ENCODE measurements at regions of chr20 and their contacts with region 1.

Region 1: GRCh38 chr20:62010551-62011402 is 54.9 kb downstream of the TAF4 start:
- DNase-seq: peak; percentile 69
- ATAC-seq: peak; percentile 80
- H3K4me3 Mint-ChIP-seq: no peak overlapping the region
- H3K27ac Mint-ChIP-seq: peak overlapping the region; percentile 91; the same call in 1 of the 2 replicates
- H3K4me1 Mint-ChIP-seq: peaks cover 4% of the 10 kb centered on the region
- H3K27me3 Mint-ChIP-seq: no peaks in the 10 kb centered on the region
- CTCF ChIP-seq: peak; percentile 32; the same call in 1 of the 2 replicates

Region 2: DNA sequence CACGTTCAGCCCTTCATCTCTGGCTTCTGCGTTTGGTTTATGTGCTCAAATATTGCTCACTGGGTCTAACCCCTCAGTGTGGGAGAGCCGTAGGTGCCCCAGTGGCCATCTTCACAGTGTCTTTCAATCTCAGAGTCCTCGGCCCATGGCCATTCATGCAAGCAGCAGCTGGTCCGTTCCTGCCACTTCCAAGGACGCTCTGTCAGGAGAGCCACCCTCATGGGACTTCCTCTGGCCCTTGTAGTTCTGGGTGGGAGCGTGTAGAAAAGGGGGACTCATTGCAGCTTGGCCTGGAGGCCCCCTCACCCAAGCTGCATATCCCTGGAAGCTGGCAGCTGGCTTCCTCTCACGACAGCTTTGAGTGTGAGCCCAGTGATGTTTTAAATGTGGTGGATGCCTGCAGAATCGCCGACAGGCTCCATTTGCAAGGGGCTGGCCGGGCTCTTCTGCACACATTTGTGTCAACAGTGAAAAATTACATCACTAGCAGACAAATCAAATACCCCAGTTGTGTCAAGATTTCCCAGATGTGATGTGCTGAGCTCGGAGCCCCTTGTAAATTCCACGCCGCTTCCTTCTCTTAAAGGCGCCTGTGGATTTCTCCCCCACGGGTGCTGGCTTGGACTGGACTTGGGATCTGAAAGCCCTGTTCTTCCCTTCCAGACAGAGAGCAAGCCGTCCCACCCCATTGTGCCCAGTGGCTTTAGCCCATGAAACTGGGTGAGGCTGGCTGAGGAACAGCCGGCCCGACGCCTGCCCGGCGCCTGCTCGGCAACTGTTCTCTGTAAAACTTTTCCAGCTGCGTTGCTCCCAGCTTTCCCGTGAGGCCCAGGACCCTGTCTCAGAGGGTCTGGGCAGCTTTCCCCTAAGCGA is 305.2 kb before region 1 on chr20:
- CTCF ChIA-PET with region 1: no interaction called
- POLR2A ChIA-PET with region 1: no interaction called
- DNase-seq: no peak
- ATAC-seq: no peak
- H3K4me3 Mint-ChIP-seq: no peak overlapping the region
- H3K27ac Mint-ChIP-seq: no peak overlapping the region
- H3K4me1 Mint-ChIP-seq: no peaks in the 10 kb centered on the region
- H3K27me3 Mint-ChIP-seq: peaks cover 22% of the 10 kb centered on the region
- CTCF ChIP-seq: no peak

Region 3: GRCh38 chr20:62030834-62031434 is 20.2 kb after region 1 on chr20:
- CTCF ChIA-PET with region 1: interaction called, 12 read pairs
- POLR2A ChIA-PET with region 1: no interaction called
- DNase-seq: no peak
- ATAC-seq: no peak
- H3K4me3 Mint-ChIP-seq: no peak overlapping the region
- H3K27ac Mint-ChIP-seq: peak overlapping the region; percentile 91
- H3K4me1 Mint-ChIP-seq: peaks cover 62% of the 10 kb centered on the region
- H3K27me3 Mint-ChIP-seq: no peaks in the 10 kb centered on the region
- CTCF ChIP-seq: no peak

Region 4: DNA sequence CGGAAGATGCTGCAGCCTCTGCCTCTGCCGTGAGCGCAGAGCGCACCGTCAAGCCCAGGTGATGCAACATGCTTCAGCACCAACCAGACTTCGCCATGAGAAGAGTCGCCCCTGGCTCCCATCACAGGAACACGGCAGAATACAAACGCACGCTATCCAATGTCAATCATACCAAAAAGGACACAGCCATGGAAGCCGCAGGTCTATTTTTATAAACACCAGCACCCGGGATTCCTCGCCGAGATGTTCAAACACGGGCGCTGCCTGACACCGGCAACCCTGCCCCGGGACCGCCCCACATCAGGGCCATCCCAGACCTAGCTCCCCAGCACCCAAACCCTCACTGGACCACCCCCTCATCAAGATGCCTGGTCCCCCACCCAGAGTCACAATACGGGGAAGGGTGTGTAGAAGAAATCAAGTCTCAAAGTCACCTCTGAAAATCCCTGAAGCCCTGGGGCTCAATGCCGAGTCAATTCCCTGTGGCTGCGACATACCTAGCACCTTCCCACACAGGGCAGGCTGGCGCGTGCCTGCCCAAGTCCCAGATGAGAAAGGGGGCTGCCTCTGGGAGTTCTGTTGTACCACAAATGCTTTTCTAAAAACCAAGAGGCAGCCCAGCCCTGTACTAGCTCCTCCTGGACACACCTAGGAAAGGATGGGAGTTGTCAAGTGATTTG is 37.0 kb after region 1 on chr20:
- CTCF ChIA-PET with region 1: interaction called, 11 read pairs
- POLR2A ChIA-PET with region 1: no interaction called
- DNase-seq: peak; percentile 6
- ATAC-seq: no peak
- H3K4me3 Mint-ChIP-seq: no peak overlapping the region
- H3K27ac Mint-ChIP-seq: peak overlapping the region; percentile 3
- H3K4me1 Mint-ChIP-seq: peaks cover 72% of the 10 kb centered on the region
- H3K27me3 Mint-ChIP-seq: no peaks in the 10 kb centered on the region
- CTCF ChIP-seq: no peak

Region 5: DNA sequence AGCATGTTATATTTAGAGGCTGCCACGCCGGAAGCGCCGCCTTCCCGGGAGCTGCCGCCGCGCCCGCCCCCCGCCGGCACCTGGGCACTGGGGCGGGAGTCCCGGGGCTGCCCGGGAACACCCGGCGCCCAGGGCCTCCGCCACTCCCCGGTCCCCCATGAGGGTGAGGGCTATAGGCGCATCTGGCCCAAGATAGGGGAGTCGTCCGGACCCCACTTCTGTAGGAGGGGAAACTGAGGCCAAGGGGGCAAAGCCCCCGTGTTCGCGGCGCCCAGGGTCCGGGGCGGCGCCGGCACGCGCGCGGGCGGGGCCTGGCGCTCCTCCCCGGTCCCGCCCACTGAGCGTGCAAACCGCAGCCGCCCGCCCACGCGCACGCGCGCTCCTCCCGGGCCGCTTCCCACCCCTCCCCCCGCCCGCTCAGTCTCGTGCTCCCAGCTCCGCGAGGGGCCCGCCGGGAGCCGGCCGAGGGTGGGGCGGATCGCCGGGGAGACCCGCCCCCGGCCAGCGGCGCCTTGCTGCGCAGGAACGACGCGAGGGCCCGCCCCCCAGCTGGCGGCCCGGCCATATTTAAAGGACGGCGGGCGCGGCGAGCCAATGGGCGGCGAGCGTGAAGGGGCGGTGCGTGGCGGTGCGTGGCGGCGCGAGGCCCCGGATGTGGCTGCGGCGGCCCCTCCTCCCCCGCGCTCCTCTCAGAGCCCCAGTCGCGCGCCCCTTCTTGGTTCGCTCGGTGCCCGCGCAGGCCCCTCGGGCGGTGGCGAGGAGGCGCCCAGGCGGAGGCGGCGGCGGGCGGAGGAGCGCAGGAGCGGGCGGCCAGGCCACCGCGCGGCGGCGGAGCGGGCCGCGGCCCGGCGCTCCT is 111.2 kb after region 1 on chr20 and contains the start of gene LSM14B:
- CTCF ChIA-PET with region 1: interaction called, 14 read pairs
- POLR2A ChIA-PET with region 1: no interaction called
- DNase-seq: peak; percentile 92
- ATAC-seq: peak; percentile 80
- H3K4me3 Mint-ChIP-seq: peak within 1 kb of the TSS; percentile 84
- H3K27ac Mint-ChIP-seq: peak within 1 kb of the TSS; percentile 95
- H3K4me1 Mint-ChIP-seq: peaks cover 31% of the 10 kb centered on the region
- H3K27me3 Mint-ChIP-seq: no peaks in the 10 kb centered on the region
- CTCF ChIP-seq: no peak
- total RNA-seq, gene LSM14B: 67.4 to 73.5 TPM (median 69.7 TPM) in 3 replicates

Region 6: GRCh38 chr20:62136283-62137091 is 125.7 kb after region 1 on chr20:
- CTCF ChIA-PET with region 1: interaction called, 21 read pairs
- POLR2A ChIA-PET with region 1: no interaction called
- DNase-seq: peak; percentile 74
- ATAC-seq: peak; percentile 66
- H3K4me3 Mint-ChIP-seq: no peak overlapping the region
- H3K27ac Mint-ChIP-seq: peak overlapping the region; percentile 77
- H3K4me1 Mint-ChIP-seq: peaks cover 3% of the 10 kb centered on the region
- H3K27me3 Mint-ChIP-seq: no peaks in the 10 kb centered on the region
- CTCF ChIP-seq: peak; percentile 50

Region 7: DNA sequence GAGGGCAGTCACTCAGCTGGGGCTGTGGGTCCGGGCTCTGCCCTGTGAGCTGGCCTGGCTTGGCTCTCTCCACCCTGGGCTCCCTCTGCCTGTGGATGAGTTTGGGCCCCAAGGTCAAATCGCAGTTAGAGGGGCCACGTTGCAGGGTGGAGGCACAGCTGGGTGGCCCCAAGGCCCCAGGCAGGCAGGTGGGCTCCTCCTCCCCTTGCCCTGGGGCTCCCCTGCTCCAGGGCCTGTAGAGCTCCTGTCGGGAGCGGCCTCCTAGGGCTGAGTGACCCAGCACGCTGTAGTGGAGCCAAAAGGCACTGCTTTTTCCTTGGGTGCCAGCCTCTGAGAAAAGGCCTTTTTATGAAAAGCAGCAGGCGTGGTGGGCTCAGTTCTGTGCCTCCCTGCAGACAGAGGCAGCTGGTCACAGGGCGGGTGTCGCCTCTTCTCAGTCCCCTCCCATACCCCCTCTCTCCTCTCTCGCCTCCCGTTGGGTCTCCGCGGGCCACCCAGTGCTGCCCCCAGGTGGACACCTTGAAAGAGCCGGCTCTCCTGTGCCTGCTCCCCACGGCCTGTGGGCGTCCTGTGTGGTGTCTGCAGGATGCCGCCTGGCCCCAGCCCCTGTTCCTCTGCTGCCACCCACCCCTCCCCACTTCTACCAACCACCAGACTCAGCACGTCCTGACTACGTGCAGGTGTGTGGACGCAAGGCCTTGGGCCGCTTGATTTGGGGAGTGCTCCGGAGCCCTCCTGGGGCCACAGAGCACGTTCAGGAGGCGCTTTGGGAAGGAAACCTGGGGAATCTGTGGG is 146.0 kb after region 1 on chr20:
- CTCF ChIA-PET with region 1: interaction called, 28 read pairs
- POLR2A ChIA-PET with region 1: no interaction called
- DNase-seq: peak; percentile 86
- ATAC-seq: peak; percentile 84
- H3K4me3 Mint-ChIP-seq: no peak overlapping the region
- H3K27ac Mint-ChIP-seq: no peak overlapping the region
- H3K4me1 Mint-ChIP-seq: peaks cover 28% of the 10 kb centered on the region
- H3K27me3 Mint-ChIP-seq: no peaks in the 10 kb centered on the region
- CTCF ChIP-seq: peak; percentile 72